ENCODE measurements at regions of chr15 and their contacts with region 1.

Region 1: GRCh38 chr15:31435261-31435911 is 108.8 kb downstream of the KLF13 start:
- DNase-seq: peak; percentile 89
- H3K4me3 Mint-ChIP-seq: peak overlapping the region; percentile 26
- H3K27ac Mint-ChIP-seq: peak overlapping the region; percentile 90
- H3K4me1 Mint-ChIP-seq: peaks cover 15% of the 10 kb centered on the region
- H3K27me3 Mint-ChIP-seq: no peaks in the 10 kb centered on the region
- CTCF ChIP-seq: peak; percentile 50

Region 2: DNA sequence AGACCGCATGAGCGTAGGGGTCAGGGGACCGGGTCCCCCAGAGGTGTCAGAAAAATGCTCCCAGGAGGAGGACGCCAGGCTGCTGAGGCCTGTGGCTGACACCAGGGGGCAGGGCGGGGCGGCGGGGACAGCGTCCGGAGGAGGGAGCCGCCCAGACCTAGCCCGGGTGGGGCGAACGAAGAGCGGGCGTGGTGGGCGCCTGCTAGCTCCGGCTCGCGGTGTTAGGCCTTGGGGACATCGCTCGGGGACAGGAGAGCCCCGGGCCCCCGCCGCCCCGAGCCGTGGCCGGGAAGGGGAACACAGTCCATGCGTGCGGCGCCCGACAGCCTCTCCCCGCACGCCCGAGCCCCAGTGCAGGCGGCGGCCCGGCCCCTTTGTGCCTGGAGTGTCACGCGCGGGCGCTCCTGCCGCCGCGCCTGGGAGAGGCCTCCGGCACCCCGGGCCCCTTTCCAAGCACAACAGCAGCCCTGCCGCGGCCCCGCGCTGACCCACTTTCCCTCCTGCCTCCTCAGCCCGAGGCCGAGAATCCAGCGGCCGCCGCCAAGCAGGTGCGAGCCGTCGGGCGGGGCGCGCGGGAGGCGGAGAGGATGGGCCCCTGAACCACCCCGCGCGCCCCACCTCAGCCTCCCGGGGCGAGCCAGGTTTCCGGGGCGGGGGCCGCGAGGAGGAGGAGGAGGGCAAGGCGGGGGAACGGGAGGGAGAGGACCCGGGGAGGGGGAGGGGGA is 219.7 kb before region 1 on chr15:
- CTCF ChIA-PET with region 1: interaction called, 4 read pairs
- POLR2A ChIA-PET with region 1: interaction called, 3 read pairs
- intact Hi-C with region 1: loop called (anchors 1 kb)
- DNase-seq: peak; percentile 94
- H3K4me3 Mint-ChIP-seq: peak overlapping the region; percentile 68
- H3K27ac Mint-ChIP-seq: peak overlapping the region; percentile 57
- H3K4me1 Mint-ChIP-seq: peaks cover 16% of the 10 kb centered on the region
- H3K27me3 Mint-ChIP-seq: no peaks in the 10 kb centered on the region
- CTCF ChIP-seq: peak; percentile 80

Region 3: GRCh38 chr15:31326156-31326732 is 109.1 kb before region 1 on chr15:
- CTCF ChIA-PET with region 1: interaction called, 7 read pairs
- POLR2A ChIA-PET with region 1: interaction called, 6 read pairs
- intact Hi-C with region 1: loop called (anchors 2 kb)
- DNase-seq: peak; percentile 97
- H3K4me3 Mint-ChIP-seq: peak overlapping the region; percentile 95
- H3K27ac Mint-ChIP-seq: no peak overlapping the region
- H3K4me1 Mint-ChIP-seq: peaks cover 19% of the 10 kb centered on the region
- H3K27me3 Mint-ChIP-seq: no peaks in the 10 kb centered on the region
- CTCF ChIP-seq: no peak

Region 4: GRCh38 chr15:31396881-31397560 is 38.4 kb before region 1 on chr15:
- CTCF ChIA-PET with region 1: interaction called, 20 read pairs
- POLR2A ChIA-PET with region 1: interaction called, 9 read pairs
- intact Hi-C with region 1: no loop called
- DNase-seq: peak; percentile 96
- H3K4me3 Mint-ChIP-seq: no peak overlapping the region
- H3K27ac Mint-ChIP-seq: peak overlapping the region; percentile 87
- H3K4me1 Mint-ChIP-seq: peaks cover 44% of the 10 kb centered on the region
- H3K27me3 Mint-ChIP-seq: no peaks in the 10 kb centered on the region
- CTCF ChIP-seq: no peak

Region 5: GRCh38 chr15:31412824-31413223 is 22.6 kb before region 1 on chr15:
- CTCF ChIA-PET with region 1: interaction called, 11 read pairs
- POLR2A ChIA-PET with region 1: interaction called, 6 read pairs
- intact Hi-C with region 1: no loop called
- DNase-seq: peak; percentile 66
- H3K4me3 Mint-ChIP-seq: no peak overlapping the region
- H3K27ac Mint-ChIP-seq: peak overlapping the region; percentile 17
- H3K4me1 Mint-ChIP-seq: peaks cover 24% of the 10 kb centered on the region
- H3K27me3 Mint-ChIP-seq: no peaks in the 10 kb centered on the region
- CTCF ChIP-seq: no peak

Region 6: GRCh38 chr15:31458591-31459399 is 23.4 kb after region 1 on chr15:
- CTCF ChIA-PET with region 1: interaction called, 9 read pairs
- POLR2A ChIA-PET with region 1: interaction called, 13 read pairs
- intact Hi-C with region 1: no loop called
- DNase-seq: peak; percentile 71
- H3K4me3 Mint-ChIP-seq: peak overlapping the region; percentile 1
- H3K27ac Mint-ChIP-seq: peak overlapping the region; percentile 57
- H3K4me1 Mint-ChIP-seq: peaks cover 24% of the 10 kb centered on the region
- H3K27me3 Mint-ChIP-seq: no peaks in the 10 kb centered on the region
- CTCF ChIP-seq: no peak

Region 7: GRCh38 chr15:31465083-31465955 is 29.9 kb after region 1 on chr15:
- CTCF ChIA-PET with region 1: interaction called, 9 read pairs
- POLR2A ChIA-PET with region 1: interaction called, 12 read pairs
- intact Hi-C with region 1: no loop called
- DNase-seq: peak; percentile 80
- H3K4me3 Mint-ChIP-seq: peak overlapping the region; percentile 66
- H3K27ac Mint-ChIP-seq: peak overlapping the region; percentile 90
- H3K4me1 Mint-ChIP-seq: peaks cover 10% of the 10 kb centered on the region
- H3K27me3 Mint-ChIP-seq: no peaks in the 10 kb centered on the region
- CTCF ChIP-seq: no peak

Region 8: DNA sequence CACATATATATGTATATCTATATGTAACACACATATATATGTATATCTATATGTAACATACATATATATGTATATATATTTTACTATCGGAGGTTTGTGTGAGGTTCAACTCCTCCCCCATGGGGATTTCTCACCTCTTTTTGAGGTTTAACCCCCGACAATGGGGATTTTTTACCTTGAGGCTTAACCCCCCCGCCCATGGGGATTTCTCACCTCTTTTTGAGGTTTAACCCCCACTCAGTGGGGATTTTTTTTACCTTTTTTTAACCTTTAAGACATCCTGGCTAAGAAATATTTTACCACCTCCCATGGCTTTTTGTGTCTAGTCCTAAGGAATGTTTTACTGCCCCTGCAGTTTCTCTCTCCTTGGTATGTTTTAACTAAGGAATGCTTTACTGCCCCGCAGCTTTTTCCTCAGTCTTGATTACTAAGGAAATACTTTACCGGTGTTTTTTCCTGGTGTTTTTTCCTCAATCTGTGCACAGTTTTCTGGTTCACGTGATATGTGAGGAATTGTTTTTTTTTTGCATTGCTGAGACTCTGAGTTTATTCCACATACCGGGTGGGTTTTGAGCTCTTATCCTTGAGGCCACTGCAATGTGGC is 76.4 kb after region 1 on chr15:
- CTCF ChIA-PET with region 1: no interaction called
- POLR2A ChIA-PET with region 1: no interaction called
- intact Hi-C with region 1: no loop called
- DNase-seq: no peak
- H3K4me3 Mint-ChIP-seq: no peak overlapping the region
- H3K27ac Mint-ChIP-seq: no peak overlapping the region
- H3K4me1 Mint-ChIP-seq: no peaks in the 10 kb centered on the region
- H3K27me3 Mint-ChIP-seq: peaks cover 12% of the 10 kb centered on the region
- CTCF ChIP-seq: no peak